ENCODE measurements at regions of chr2 and their contacts with region 1.

Region 1: GRCh38 chr2:9555297-9556141 is at the start of gene ADAM17:
- DNase-seq: peak; percentile 97
- H3K4me3 Mint-ChIP-seq: peak within 1 kb of the TSS; percentile 96
- H3K27ac Mint-ChIP-seq: peak within 1 kb of the TSS; percentile 93
- H3K4me1 Mint-ChIP-seq: peaks cover 48% of the 10 kb centered on the region
- H3K27me3 Mint-ChIP-seq: no peaks in the 10 kb centered on the region
- total RNA-seq, gene ADAM17: 25.6 and 26.5 TPM in 2 replicates

Region 2: GRCh38 chr2:9356292-9356691 is 199.2 kb before region 1 on chr2:
- intact Hi-C with region 1: no loop called
- DNase-seq: no peak
- H3K4me3 Mint-ChIP-seq: no peak overlapping the region
- H3K27ac Mint-ChIP-seq: no peak overlapping the region
- H3K4me1 Mint-ChIP-seq: no peaks in the 10 kb centered on the region
- H3K27me3 Mint-ChIP-seq: peaks cover 28% of the 10 kb centered on the region

Region 3: GRCh38 chr2:9423100-9423921 is 132.2 kb before region 1 on chr2 and contains the starts of genes CPSF3 and ITGB1BP1:
- intact Hi-C with region 1: loop called (anchors 2 kb)
- DNase-seq: peak; percentile 99
- H3K4me3 Mint-ChIP-seq: no peak within 1 kb of the TSS
- H3K27ac Mint-ChIP-seq: peak within 1 kb of the TSS; percentile 94
- H3K4me1 Mint-ChIP-seq: peaks cover 34% of the 10 kb centered on the region
- H3K27me3 Mint-ChIP-seq: no peaks in the 10 kb centered on the region
- total RNA-seq, gene CPSF3: 81.4 TPM in 2 replicates
- total RNA-seq, gene ITGB1BP1: 121 and 131 TPM in 2 replicates

Region 4: DNA sequence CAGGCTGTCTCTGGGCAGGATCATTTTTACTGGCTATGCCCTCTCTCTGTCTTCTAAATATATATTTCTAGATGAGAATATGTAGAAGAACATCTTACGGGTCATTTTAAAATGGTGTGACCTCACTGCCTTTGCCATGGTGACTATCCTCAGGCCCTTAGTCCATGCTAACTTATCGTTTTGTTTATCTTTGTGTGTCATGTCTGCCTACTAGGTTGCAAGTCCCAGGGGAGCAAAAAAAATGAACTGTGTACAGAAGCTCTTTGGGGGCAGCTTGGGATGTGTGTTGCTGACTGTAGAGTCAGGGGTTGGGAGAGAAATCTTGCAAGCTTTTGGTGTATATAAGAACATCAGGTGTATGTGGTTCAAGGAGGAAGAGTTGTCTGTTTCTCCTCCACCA is 121.0 kb before region 1 on chr2:
- intact Hi-C with region 1: no loop called
- DNase-seq: no peak
- H3K4me3 Mint-ChIP-seq: no peak overlapping the region
- H3K27ac Mint-ChIP-seq: peak overlapping the region; percentile 48
- H3K4me1 Mint-ChIP-seq: peaks cover 13% of the 10 kb centered on the region
- H3K27me3 Mint-ChIP-seq: no peaks in the 10 kb centered on the region

Region 5: GRCh38 chr2:9508931-9509330 is 46.6 kb before region 1 on chr2:
- intact Hi-C with region 1: no loop called
- DNase-seq: no peak
- H3K4me3 Mint-ChIP-seq: no peak overlapping the region
- H3K27ac Mint-ChIP-seq: no peak overlapping the region
- H3K4me1 Mint-ChIP-seq: no peaks in the 10 kb centered on the region
- H3K27me3 Mint-ChIP-seq: no peaks in the 10 kb centered on the region

Region 6: DNA sequence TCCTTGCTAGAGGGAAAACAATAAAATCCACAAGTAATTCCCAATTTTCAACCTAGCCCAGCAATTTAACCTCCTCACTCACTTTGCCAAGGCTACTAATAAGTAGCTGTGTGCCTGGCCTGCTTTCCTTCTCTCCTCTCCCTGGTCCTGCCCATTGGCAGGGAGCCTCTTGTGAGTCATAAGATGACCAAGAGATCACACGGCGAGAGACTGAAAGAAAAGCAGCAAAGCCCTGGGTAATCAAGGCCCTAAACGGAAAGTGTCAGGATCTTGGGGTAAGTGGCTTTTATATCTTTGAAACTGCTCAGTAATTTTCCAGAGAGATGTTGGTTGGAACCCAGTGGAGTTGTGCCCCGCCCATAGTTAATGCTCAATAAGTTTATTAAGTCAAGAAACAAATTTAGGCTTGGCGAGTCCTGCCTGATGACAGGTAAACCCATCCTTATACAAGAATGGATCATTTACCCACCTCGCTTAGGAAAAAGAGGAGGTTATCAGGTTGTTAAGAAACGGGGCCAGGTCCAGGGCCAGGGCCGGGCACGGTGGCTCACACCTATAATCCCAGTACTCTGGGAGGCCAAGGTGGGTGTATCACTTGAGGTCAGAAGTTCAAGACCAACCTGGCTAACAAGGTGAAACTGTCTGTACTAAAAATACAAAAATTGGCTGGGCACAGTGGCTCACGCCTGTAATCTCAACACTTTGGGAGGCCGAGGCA is 10.1 kb after region 1 on chr2:
- intact Hi-C with region 1: no loop called
- DNase-seq: no peak
- H3K4me3 Mint-ChIP-seq: no peak overlapping the region
- H3K27ac Mint-ChIP-seq: no peak overlapping the region
- H3K4me1 Mint-ChIP-seq: peaks cover 3% of the 10 kb centered on the region
- H3K27me3 Mint-ChIP-seq: no peaks in the 10 kb centered on the region

Region 7: GRCh38 chr2:9613291-9613690 is 57.8 kb after region 1 on chr2:
- intact Hi-C with region 1: loop called (anchors 1 kb)
- DNase-seq: no peak
- H3K4me3 Mint-ChIP-seq: no peak overlapping the region
- H3K27ac Mint-ChIP-seq: no peak overlapping the region
- H3K4me1 Mint-ChIP-seq: peaks cover 77% of the 10 kb centered on the region
- H3K27me3 Mint-ChIP-seq: no peaks in the 10 kb centered on the region

Region 8: DNA sequence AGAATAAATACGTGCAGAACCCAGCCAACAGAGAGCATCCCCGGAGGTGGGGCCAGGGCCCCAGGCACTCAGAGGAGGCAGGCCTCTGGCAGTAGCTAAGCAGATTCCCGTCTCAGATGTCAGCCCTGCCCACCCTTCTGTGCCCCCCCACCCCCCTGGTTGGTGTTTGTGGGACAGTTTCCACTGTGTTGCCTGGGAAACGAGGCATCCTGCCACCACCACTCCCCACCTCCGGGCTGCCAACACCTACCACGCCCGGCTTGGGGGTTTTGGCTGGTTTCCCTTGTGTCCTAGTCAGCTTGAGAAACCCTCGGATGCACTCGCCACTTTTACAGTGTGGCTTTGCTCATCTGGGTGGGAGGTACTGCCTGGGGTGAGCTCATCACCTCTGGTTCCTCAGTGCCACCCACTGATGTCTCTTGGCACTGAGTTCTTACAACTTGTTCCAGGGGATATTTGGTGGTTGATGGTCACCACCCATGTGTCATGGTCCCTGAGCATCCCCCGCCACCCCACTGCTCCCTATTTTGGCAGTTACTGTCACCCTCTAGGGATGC is 147.6 kb after region 1 on chr2:
- intact Hi-C with region 1: loop called (anchors 2 kb)
- DNase-seq: peak; percentile 93
- H3K4me3 Mint-ChIP-seq: peak overlapping the region; percentile 32
- H3K27ac Mint-ChIP-seq: peak overlapping the region; percentile 64
- H3K4me1 Mint-ChIP-seq: peaks cover 41% of the 10 kb centered on the region
- H3K27me3 Mint-ChIP-seq: peaks cover 2% of the 10 kb centered on the region

Region 9: GRCh38 chr2:9843229-9844035 is 287.9 kb after region 1 on chr2 and contains the start of gene TAF1B:
- intact Hi-C with region 1: loop called (anchors 1 kb)
- DNase-seq: peak; percentile 97
- H3K4me3 Mint-ChIP-seq: peak within 1 kb of the TSS; percentile 92
- H3K27ac Mint-ChIP-seq: peak within 1 kb of the TSS; percentile 92
- H3K4me1 Mint-ChIP-seq: peaks cover 34% of the 10 kb centered on the region
- H3K27me3 Mint-ChIP-seq: no peaks in the 10 kb centered on the region
- total RNA-seq, gene TAF1B: 21.9 and 22.7 TPM in 2 replicates

Region 10: DNA sequence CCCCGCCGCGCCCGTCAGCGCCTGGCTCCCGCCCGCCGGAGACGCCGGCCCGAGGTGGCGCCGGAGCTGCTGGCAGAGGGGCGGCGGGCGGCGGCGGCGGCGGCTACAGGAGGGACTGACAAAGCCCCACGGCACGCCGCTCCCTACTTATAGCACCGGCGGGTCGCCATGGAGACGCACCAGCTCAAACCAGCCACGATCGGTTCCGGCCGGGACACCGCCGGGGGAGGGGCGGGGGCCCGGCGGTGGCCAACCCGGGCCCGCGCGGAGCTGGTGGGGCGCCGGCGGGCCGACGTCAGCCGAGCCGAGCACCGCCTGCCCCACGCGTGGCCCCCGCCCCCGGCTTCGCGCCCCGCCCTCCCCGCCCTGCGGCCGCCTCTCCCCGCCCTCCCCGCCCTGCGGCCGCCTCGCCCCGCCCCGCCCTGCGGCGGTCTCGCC is 892.7 kb after region 1 on chr2 and contains the start of gene ODC1:
- intact Hi-C with region 1: loop called (anchors 10 kb)
- DNase-seq: peak; percentile 98
- H3K4me3 Mint-ChIP-seq: peak within 1 kb of the TSS; percentile 90
- H3K27ac Mint-ChIP-seq: peak within 1 kb of the TSS; percentile 96
- H3K4me1 Mint-ChIP-seq: peaks cover 41% of the 10 kb centered on the region
- H3K27me3 Mint-ChIP-seq: no peaks in the 10 kb centered on the region
- total RNA-seq, gene ODC1: 267 and 273 TPM in 2 replicates